Head of caudate nucleus (tissue), 42 donors: ENCODE measurements at regions of chr6 and their contacts with region 1.

Region 1: GRCh38 chr6:166275714-166276166 is 32.5 kb downstream of the PRR18 start:
- DNase-seq: peak; percentile 60 to 93 (median 86)

Region 2: DNA sequence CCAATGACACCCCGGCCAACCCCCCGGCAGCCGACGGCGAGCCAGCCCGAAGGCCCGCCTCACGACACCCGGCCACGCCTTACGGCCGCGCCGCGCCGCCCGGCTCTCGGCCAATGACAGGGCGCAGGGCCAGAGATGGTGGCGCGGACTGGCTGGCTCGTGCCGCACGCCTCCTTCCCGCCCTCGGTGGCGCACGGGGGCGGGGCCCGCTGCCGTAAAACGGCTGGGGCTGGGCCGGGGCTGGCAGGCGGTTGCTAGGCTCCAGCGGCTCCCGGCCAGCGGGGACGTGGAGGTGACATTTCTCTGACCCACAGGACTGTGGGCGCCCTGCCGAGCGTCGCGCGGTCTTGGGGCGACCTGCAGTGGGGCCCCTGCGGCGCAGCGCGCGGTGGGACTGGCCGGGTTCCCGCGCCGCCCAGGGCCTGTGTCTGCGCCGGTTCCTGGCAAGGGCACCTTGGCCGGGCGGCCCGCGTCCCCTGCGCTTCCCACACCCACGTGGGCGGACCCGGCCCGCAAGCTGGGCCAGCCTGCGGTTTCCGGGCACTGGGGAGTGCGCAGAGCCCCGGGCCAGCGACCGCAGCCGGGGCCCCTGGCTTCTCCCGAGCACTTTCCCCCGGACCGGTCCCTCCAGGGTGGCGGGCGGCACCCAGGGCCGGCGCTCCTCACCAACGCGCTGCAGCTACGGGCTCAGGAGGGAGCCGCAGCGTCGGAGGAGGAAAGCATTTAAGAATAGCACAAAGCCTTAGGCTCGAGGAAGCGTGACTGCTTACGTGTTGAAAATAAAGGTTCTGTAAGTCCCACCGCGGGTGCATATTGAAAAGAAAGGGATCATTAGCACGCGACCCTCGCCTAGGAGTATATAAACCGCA is 107.4 kb after region 1 on chr6 and contains the start of gene MPC1:
- intact Hi-C with region 1: loop called (anchors 5 kb)
- DNase-seq: peak; percentile 86 to 99 (median 96)

Region 3: DNA sequence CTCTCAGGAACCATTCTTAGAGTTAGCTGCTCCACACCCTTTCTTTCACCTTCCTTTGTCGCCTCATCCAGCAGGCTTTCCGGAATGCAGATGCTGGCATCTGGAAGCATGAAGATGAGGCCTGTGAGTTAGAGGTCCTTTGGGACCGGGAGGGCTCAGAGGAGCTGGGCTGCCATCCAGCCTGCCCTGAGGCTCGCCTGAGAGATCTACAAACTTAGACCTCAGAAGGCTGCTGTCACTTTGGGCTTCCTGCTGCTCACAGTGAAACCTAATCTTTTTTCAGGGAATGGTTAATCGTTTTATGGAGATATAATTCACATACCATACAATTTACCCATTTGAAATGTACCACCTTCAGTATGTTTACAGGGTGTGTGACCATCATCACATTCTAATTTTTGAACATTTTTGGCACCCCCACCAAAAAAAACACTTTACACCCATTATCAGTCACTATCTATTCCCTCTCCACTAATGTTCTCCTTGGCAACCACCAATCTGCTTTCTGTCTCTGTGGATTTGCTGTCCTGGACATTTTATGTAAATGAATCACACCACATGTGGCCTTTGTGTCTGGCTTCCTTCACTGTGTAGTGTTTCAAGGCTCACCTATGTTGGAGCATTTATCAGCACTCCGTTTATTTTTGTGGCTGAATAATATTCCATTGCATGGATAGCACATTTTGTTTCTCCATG is 127.0 kb after region 1 on chr6:
- intact Hi-C with region 1: loop called (anchors 5 kb)
- DNase-seq: no peak

Region 4: DNA sequence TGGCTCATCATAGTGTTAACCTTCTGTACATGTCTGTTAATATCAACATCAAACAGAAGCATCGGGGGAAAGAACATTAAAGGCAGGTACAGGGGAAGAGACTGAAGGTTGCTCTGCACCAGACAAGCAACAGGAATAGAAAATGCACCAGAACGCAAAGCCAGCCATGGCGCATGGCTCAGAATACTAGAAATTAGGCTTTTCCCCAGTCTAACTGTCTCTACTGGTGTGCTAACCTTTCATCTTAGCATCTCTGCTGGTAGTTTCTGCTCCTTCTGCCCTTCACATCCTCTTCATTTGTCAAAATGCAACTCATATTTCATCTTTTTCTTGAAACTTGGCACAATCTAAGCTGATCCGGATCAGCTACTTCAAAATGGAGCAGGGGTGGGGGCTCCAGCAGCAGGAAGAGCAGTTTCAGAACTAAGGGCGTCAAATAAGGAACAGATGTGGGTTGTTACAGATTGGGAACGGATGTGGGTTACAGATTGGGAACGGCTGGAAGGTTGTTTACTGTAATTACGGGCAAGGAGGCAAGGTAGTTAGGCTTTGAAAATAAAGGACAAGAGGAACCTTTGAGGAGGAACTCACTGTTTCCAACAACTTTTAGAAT is 693.8 kb after region 1 on chr6:
- intact Hi-C with region 1: no loop called
- DNase-seq: peak in 2 of 42 donors; percentile 28 to 38